ENCODE measurements at regions of chr13 and their contacts with region 1.

Region 1: GRCh38 chr13:42497798-42498197 is 76.2 kb upstream of the TNFSF11 start:
- DNase-seq: no peak
- H3K4me3 Mint-ChIP-seq: no peak overlapping the region
- H3K27ac Mint-ChIP-seq: peak overlapping the region; percentile 83
- H3K4me1 Mint-ChIP-seq: peaks cover 65% of the 10 kb centered on the region
- H3K27me3 Mint-ChIP-seq: no peaks in the 10 kb centered on the region

Region 2: GRCh38 chr13:42328672-42329071 is 169.1 kb before region 1 on chr13:
- intact Hi-C with region 1: loop called (anchors 1 kb)
- DNase-seq: no peak
- H3K4me3 Mint-ChIP-seq: no peak overlapping the region
- H3K27ac Mint-ChIP-seq: peak overlapping the region; percentile 79
- H3K4me1 Mint-ChIP-seq: peaks cover 40% of the 10 kb centered on the region
- H3K27me3 Mint-ChIP-seq: no peaks in the 10 kb centered on the region

Region 3: DNA sequence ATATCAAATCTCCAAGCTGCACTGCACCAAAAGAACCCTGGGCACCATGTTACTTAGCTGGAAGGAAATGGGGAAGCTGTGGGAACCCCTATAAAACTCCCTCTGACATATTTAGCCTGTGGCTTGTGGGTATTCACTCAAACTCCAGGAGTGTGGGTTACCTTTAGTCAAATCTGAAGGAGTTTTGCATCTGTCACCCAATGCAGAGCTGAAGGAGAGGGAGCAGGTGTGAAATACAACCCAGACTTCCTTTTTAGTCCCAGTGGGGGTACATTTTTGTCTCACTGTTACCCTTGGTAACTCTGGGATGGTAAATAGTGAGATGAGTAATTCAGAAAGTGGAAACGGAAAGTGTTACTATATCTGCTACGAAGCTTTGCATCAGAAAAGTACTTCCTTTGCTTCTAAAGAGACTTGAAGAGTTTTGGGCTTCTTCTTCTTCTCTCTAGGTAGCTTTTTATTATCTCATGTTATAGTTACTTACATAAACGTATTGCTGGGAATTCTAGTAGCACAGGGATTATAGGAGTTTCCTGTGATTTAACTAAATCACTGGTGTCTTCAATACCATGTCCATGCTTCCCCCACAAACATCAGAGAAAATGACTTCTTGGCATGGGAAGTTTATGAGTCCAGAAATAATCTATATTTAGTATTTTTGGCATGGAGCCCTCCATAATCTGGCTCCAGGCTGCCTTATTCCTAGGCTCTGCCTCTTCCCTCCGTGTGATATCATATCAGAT is 120.0 kb before region 1 on chr13:
- intact Hi-C with region 1: loop called (anchors 1 kb)
- DNase-seq: peak; percentile 63
- H3K4me3 Mint-ChIP-seq: no peak overlapping the region
- H3K27ac Mint-ChIP-seq: peak overlapping the region; percentile 93
- H3K4me1 Mint-ChIP-seq: peaks cover 90% of the 10 kb centered on the region
- H3K27me3 Mint-ChIP-seq: no peaks in the 10 kb centered on the region

Region 4: DNA sequence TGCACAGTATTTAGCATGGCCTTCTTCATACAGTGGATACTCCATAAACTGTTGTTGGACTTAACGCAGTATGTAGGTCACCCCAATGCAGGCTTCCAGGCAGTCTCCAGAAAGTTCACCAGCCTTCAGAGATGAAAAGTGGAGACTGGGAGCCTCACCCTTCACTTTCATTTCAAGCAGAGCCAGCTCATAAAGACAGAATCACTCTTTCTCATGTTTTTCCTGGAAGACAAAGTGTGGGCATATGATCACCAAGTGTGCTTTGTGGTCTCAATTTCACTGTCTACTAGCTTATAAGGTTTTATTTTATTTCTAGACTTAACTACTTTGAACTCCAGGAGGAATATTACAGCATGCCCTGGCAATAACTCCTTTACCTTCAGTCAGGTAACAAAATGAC is 49.8 kb after region 1 on chr13:
- intact Hi-C with region 1: loop called (anchors 2 kb)
- DNase-seq: no peak
- H3K4me3 Mint-ChIP-seq: no peak overlapping the region
- H3K27ac Mint-ChIP-seq: no peak overlapping the region
- H3K4me1 Mint-ChIP-seq: peaks cover 30% of the 10 kb centered on the region
- H3K27me3 Mint-ChIP-seq: no peaks in the 10 kb centered on the region

Region 5: GRCh38 chr13:43054803-43055802 is 557.3 kb after region 1 on chr13:
- intact Hi-C with region 1: loop called (anchors 10 kb)
- DNase-seq: no peak
- H3K4me3 Mint-ChIP-seq: no peak overlapping the region
- H3K27ac Mint-ChIP-seq: no peak overlapping the region
- H3K4me1 Mint-ChIP-seq: peaks cover 35% of the 10 kb centered on the region
- H3K27me3 Mint-ChIP-seq: no peaks in the 10 kb centered on the region